ENCODE measurements at regions of chr1 and their contacts with region 1.

Region 1: DNA sequence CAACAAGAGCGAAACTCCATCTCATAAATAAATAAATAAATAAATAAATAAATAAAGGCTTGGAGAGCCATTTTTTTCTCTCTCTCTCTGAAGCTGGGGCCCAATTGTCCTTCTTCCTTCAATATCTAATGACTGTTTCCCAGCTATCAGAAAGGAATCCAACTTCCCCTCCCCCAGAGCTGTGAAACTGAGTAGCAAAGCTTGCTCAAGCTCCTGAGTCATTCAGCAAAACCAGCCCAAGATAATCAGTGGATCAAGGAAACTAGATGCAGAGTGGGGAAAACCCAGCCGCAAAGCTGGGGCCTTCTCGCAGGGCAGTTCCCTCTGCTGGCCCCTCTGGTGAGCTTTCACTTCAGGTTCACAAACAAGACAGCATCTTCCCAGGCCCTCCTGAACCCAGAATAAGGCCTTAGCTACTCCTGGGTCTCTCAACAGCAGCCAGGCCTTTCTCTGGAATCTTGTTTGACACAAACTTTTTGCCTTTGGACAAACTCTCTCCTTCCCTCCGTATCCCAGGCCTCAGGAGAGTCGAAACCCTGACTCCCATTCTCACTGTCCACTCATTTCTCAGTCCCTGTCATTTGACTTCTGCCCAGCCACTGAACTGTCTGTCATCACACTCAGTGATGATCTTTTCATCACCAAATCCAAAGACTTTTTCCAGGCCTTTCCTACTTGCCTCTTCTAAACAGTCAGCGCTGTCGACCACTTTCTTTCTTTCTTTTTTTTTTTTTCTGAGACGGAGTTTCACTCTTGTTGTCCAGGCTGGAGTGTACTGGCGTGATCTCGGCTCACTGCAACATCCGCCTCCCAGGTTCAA is 18.0 kb upstream of the PTP4A2 start:
- DNase-seq: peak; percentile 79 to 82
- H3K4me3 ChIP-seq: no peak overlapping the region
- H3K4me3 Mint-ChIP-seq: peak overlapping the region; percentile 27
- H3K27ac Mint-ChIP-seq: peak overlapping the region; percentile 99
- H3K4me1 ChIP-seq: peaks cover 26% of the 10 kb centered on the region
- H3K4me1 Mint-ChIP-seq: peaks cover 35% of the 10 kb centered on the region
- H3K27me3 ChIP-seq: no peaks in the 10 kb centered on the region
- H3K27me3 Mint-ChIP-seq: no peaks in the 10 kb centered on the region
- CTCF ChIP-seq: peak in 1 of 2 experiments; percentile 18

Region 2: DNA sequence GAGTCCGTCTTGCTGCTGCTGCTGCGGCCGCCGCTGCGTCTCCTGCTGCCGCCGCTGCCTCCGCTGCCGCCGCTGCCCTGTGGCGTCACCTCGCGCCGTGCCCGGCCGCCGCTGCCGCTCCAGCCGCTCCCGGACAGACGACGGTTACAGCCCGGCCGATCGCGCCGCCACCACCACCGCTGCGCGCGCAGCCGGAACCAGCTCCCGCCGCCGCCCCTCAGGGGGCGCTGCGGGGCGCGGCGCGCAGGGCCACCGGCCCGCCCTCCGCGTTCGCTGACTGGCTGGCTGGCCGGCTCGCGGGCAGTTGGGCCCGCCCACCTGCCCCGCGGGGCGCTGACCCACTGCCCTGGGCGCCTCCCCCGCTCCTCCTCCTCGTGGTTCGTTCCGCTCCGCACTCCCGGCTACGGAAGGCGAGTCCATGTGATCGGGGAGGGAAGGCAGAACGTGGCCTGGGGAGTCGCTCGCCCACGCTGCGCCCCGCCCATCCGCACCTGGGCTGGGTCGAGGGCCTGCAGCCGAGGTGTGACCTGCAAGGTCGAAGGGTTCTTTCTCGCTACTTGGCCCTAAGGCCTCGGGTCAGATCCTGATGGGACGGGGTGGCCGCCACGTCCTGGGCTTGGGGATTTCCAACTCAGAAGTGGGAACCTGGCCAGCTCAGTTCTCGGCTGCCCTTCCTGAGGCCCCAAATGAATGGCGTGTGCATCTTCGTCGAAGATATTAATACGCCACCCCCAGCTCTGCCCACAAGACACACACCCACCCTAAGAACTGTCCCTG is 17.8 kb before region 1 on chr1 and contains the start of gene PTP4A2:
- CTCF ChIA-PET with region 1: interaction called, 8 read pairs
- POLR2A ChIA-PET with region 1: interaction called, 34 read pairs
- intact Hi-C with region 1: loop called (anchors 2 kb)
- DNase-seq: peak; percentile 94 to 96
- H3K4me3 ChIP-seq: peak within 1 kb of the TSS; percentile 94
- H3K4me3 Mint-ChIP-seq: peak within 1 kb of the TSS; percentile 99
- H3K27ac Mint-ChIP-seq: peak within 1 kb of the TSS; percentile 91
- H3K4me1 ChIP-seq: peaks cover 41% of the 10 kb centered on the region
- H3K4me1 Mint-ChIP-seq: peaks cover 27% of the 10 kb centered on the region
- H3K27me3 ChIP-seq: no peaks in the 10 kb centered on the region
- H3K27me3 Mint-ChIP-seq: no peaks in the 10 kb centered on the region
- CTCF ChIP-seq: peak in 1 of 2 experiments; percentile 20
- total RNA-seq, gene PTP4A2: 150 and 169 TPM in 2 replicates

Region 3: DNA sequence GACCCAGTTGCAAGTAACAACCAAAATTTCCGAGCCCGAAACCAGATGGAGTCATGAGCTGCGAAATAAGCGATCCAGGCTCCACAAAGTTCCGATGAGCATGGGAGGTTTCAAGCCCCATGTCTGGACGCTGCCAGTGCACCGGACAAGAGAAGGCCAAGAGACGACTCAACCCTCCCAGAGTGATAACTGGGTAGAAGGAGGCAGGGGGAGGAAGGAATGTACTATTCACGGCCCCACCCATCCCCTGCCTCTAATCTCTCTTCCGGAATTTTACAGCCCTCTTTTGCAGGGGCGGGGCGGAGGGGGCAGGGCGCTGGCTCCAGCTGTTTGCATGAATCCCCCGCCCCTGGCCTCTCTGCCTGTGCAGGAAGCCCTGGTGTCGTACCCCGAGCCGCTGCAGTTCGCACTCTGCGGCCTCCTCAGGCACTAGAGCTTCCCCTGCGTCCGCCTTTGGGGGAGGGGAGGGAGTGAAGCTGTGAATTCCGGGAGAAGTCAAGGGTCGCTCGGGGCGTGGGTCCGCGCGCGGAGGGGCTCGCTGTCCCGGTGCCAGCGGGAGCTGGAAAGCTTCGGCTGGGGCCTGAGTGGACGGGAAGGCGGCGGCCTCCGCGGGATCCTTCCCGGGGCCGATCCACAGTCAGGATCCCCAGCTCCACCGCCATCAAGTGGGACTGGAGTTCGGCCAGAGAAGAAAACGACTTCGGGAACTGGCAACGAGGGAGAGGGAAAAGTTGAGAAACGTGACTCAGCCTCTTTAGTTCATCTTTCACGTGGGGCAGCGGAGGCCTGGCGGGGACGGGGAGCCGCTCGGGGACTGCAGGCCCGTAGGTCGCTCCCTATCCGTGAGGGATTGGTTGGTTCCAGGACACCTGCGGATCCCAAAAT is 11.7 kb before region 1 on chr1:
- CTCF ChIA-PET with region 1: interaction called, 5 read pairs
- POLR2A ChIA-PET with region 1: interaction called, 34 read pairs
- intact Hi-C with region 1: loop called (anchors 1 kb)
- DNase-seq: peak; percentile 94 to 96
- H3K4me3 ChIP-seq: peak overlapping the region; percentile 43
- H3K4me3 Mint-ChIP-seq: peak overlapping the region; percentile 76
- H3K27ac Mint-ChIP-seq: peak overlapping the region; percentile 92
- H3K4me1 ChIP-seq: peaks cover 19% of the 10 kb centered on the region
- H3K4me1 Mint-ChIP-seq: peaks cover 11% of the 10 kb centered on the region
- H3K27me3 ChIP-seq: no peaks in the 10 kb centered on the region
- H3K27me3 Mint-ChIP-seq: no peaks in the 10 kb centered on the region
- CTCF ChIP-seq: no peak

Region 4: DNA sequence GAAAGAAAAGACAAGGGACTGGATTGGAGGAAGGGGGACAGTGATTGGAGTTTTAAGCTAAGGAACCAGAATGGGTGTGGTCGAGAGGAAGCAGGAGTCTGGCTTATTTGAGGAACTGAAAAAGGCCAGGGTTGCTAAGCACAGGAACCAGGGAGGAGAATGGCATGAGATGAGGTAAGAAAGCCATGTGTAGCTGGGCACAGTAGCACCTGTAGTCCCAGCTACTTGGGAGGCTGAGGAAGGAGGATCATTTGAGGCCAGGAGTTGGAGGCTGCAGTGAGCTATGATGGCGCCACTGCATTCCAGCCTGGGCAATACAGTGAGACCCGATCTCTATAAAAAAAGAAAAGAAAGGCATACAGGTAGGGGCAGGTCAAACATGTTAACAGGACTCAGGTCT is 49.4 kb after region 1 on chr1:
- CTCF ChIA-PET with region 1: no interaction called
- POLR2A ChIA-PET with region 1: no interaction called
- intact Hi-C with region 1: no loop called
- DNase-seq: no peak
- H3K4me3 ChIP-seq: no peak overlapping the region
- H3K4me3 Mint-ChIP-seq: no peak overlapping the region
- H3K27ac Mint-ChIP-seq: no peak overlapping the region
- H3K4me1 ChIP-seq: no peaks in the 10 kb centered on the region
- H3K4me1 Mint-ChIP-seq: no peaks in the 10 kb centered on the region
- H3K27me3 ChIP-seq: no peaks in the 10 kb centered on the region
- H3K27me3 Mint-ChIP-seq: no peaks in the 10 kb centered on the region
- CTCF ChIP-seq: no peak

Measured in Caco-2 (cell line).